IMR-90 (cell line): ENCODE measurements at regions of chr12 and their contacts with region 1.

Region 1: GRCh38 chr12:99611117-99611516 is 36.4 kb upstream of the GARIN6 start:
- DNase-seq: no peak
- ATAC-seq: no peak
- H3K4me3 ChIP-seq: no peak overlapping the region
- H3K27ac ChIP-seq: no peak overlapping the region
- H3K4me1 ChIP-seq: no peaks in the 10 kb centered on the region
- H3K27me3 ChIP-seq: no peaks in the 10 kb centered on the region
- CTCF ChIP-seq: no peak
- POLR2A ChIP-seq: no peak
- RAD21 ChIP-seq: no peak

Region 2: DNA sequence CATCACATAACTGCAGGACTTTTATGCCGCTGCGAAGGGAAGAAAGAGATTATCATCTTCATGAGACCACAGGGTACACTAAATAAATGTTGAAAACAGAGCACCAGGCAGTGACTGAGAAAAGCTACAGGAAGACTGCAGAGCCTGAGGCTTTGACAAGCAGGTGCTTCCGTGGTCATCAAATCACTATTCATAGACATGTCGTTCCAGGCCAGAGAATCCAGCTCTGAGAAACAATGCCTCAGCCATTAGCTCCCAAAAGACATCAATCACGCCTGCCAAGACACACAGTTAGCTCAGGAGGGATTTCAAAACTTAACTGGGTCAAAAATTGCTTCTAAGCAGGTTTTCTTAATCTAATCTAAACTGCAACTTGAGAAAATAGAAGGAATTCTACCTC is 10.7 kb before region 1 on chr12:
- CTCF ChIA-PET with region 1: interaction called, 11 read pairs
- POLR2A ChIA-PET with region 1: no interaction called
- dilution Hi-C with region 1: no loop called
- in situ Hi-C with region 1: no loop called
- intact Hi-C with region 1: no loop called
- DNase-seq: no peak
- ATAC-seq: no peak
- H3K4me3 ChIP-seq: no peak overlapping the region
- H3K27ac ChIP-seq: no peak overlapping the region
- H3K4me1 ChIP-seq: no peaks in the 10 kb centered on the region
- H3K27me3 ChIP-seq: no peaks in the 10 kb centered on the region
- CTCF ChIP-seq: no peak
- POLR2A ChIP-seq: no peak
- RAD21 ChIP-seq: no peak

Region 3: DNA sequence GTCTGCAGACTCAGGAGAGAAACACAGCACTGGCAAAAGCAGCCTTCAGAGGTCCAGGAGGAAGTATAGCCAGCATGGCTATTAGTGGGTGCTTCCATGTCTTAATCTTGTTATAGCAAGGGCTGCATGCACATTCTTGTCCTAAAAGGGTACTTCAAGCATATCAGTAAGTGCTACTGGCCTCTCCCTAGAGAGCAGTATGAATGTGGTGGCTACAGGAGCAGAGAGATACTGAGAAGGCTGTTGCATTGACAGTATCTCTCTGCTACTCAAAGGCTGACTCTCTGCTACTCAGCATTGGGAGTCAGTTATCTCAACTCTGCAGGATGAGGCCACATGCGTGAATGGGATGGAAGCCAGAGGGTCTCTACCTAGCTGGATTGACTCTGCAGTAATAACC is 38.4 kb after region 1 on chr12:
- CTCF ChIA-PET with region 1: no interaction called
- POLR2A ChIA-PET with region 1: no interaction called
- dilution Hi-C with region 1: no loop called
- in situ Hi-C with region 1: no loop called
- intact Hi-C with region 1: no loop called
- DNase-seq: no peak
- ATAC-seq: no peak
- H3K4me3 ChIP-seq: no peak overlapping the region
- H3K27ac ChIP-seq: no peak overlapping the region
- H3K4me1 ChIP-seq: no peaks in the 10 kb centered on the region
- H3K27me3 ChIP-seq: no peaks in the 10 kb centered on the region
- CTCF ChIP-seq: no peak
- POLR2A ChIP-seq: no peak
- RAD21 ChIP-seq: no peak

Region 4: GRCh38 chr12:99997806-99998205 is 386.7 kb after region 1 on chr12:
- CTCF ChIA-PET with region 1: no interaction called
- POLR2A ChIA-PET with region 1: no interaction called
- dilution Hi-C with region 1: no loop called
- in situ Hi-C with region 1: no loop called
- intact Hi-C with region 1: no loop called
- DNase-seq: no peak
- ATAC-seq: no peak
- H3K4me3 ChIP-seq: no peak overlapping the region
- H3K27ac ChIP-seq: no peak overlapping the region
- H3K4me1 ChIP-seq: no peaks in the 10 kb centered on the region
- H3K27me3 ChIP-seq: no peaks in the 10 kb centered on the region
- CTCF ChIP-seq: no peak
- POLR2A ChIP-seq: no peak
- RAD21 ChIP-seq: no peak